ENCODE measurements at regions of chrX and their contacts with region 1.

Region 1: GRCh38 chrX:129781134-129781672 is 1.5 kb downstream of the SASH3 start:
- H3K4me3 Mint-ChIP-seq: peak overlapping the region; percentile 96
- H3K27ac Mint-ChIP-seq: peak overlapping the region; percentile 96
- H3K4me1 Mint-ChIP-seq: peaks cover 59% of the 10 kb centered on the region
- H3K27me3 Mint-ChIP-seq: no peaks in the 10 kb centered on the region

Region 2: DNA sequence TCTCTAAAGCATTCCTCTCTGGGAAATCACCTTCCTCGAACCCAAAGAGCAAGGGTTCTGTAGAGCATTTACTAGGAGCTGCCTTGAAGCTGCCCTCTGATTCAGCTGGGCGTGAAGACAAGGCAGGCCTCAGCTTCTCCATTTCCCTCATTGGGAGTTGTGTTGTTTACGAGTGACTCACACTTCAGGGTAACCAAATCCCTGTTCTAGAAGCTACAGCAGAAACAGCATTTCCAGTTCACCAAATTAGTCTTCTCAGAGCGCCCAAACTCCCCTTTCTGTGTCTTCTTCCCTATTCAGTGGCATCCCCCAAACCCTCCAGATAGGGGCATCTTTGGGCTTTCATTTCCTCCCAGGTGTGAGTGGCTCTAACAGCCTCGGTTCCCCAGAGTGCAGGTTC is 43.3 kb before region 1 on chrX:
- intact Hi-C with region 1: loop called (anchors 10 kb)
- H3K4me3 Mint-ChIP-seq: no peak overlapping the region
- H3K27ac Mint-ChIP-seq: peak overlapping the region; percentile 88
- H3K4me1 Mint-ChIP-seq: peaks cover 44% of the 10 kb centered on the region
- H3K27me3 Mint-ChIP-seq: no peaks in the 10 kb centered on the region

Region 3: GRCh38 chrX:129759576-129760061 is 21.6 kb before region 1 on chrX:
- intact Hi-C with region 1: loop called (anchors 2 kb)
- H3K4me3 Mint-ChIP-seq: peak overlapping the region; percentile 23
- H3K27ac Mint-ChIP-seq: peak overlapping the region; percentile 96
- H3K4me1 Mint-ChIP-seq: peaks cover 76% of the 10 kb centered on the region
- H3K27me3 Mint-ChIP-seq: no peaks in the 10 kb centered on the region

Region 4: GRCh38 chrX:129798888-129799287 is 17.7 kb after region 1 on chrX:
- intact Hi-C with region 1: loop called (anchors 2 kb)
- H3K4me3 Mint-ChIP-seq: no peak overlapping the region
- H3K27ac Mint-ChIP-seq: peak overlapping the region; percentile 79
- H3K4me1 Mint-ChIP-seq: peaks cover 51% of the 10 kb centered on the region
- H3K27me3 Mint-ChIP-seq: no peaks in the 10 kb centered on the region